ENCODE measurements at regions of chr3 and their contacts with region 1.

Region 1: DNA sequence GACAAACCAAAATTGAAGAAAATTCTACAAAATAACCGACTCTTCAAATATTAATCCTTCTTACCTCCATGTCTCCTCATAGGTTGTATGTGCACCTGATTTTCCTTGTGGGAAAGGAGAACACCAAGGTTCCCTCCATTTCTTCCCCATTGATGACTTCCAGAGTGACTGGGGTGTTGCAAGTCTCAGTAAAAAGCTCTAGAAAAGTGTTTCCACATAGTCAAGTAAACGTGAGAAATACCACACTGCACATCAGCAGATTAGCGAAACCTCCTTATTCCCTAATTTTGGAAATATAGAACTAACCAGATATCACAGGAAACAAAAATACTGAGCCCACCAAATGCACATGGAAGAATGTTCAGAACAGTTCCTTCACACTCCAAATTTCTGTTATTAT is 4.9 kb upstream of the RPN1 start:
- DNase-seq: no peak
- H3K4me3 ChIP-seq: no peak overlapping the region
- H3K27ac ChIP-seq: no peak overlapping the region
- H3K4me1 ChIP-seq: peaks cover 8% of the 10 kb centered on the region
- CTCF ChIP-seq: no peak

Region 2: GRCh38 chr3:128456776-128457715 is 198.5 kb before region 1 on chr3:
- CTCF ChIA-PET with region 1: no interaction called
- POLR2A ChIA-PET with region 1: no interaction called
- intact Hi-C with region 1: no loop called
- DNase-seq: no peak
- H3K4me3 ChIP-seq: no peak overlapping the region
- H3K27ac ChIP-seq: no peak overlapping the region
- H3K4me1 ChIP-seq: no peaks in the 10 kb centered on the region
- CTCF ChIP-seq: no peak

Region 3: GRCh38 chr3:128603811-128604775 is 51.4 kb before region 1 on chr3:
- CTCF ChIA-PET with region 1: no interaction called
- POLR2A ChIA-PET with region 1: no interaction called
- intact Hi-C with region 1: no loop called
- DNase-seq: no peak
- H3K4me3 ChIP-seq: no peak overlapping the region
- H3K27ac ChIP-seq: no peak overlapping the region
- H3K4me1 ChIP-seq: no peaks in the 10 kb centered on the region
- CTCF ChIP-seq: no peak

Region 4: GRCh38 chr3:128623762-128624176 is 31.8 kb before region 1 on chr3:
- CTCF ChIA-PET with region 1: no interaction called
- POLR2A ChIA-PET with region 1: no interaction called
- intact Hi-C with region 1: loop called (anchors 1 kb)
- DNase-seq: no peak
- H3K4me3 ChIP-seq: no peak overlapping the region
- H3K27ac ChIP-seq: no peak overlapping the region
- H3K4me1 ChIP-seq: peaks cover 11% of the 10 kb centered on the region
- CTCF ChIP-seq: no peak

Measured in OCI-LY7 (cell line).